Heart right ventricle (tissue), 16 donors: ENCODE measurements at regions of chr5 and their contacts with region 1.

Region 1: GRCh38 chr5:88613050-88613449 is 269.9 kb downstream of the MEF2C start:
- DNase-seq: no peak
- ATAC-seq: no peak
- H3K4me3 ChIP-seq: no peak overlapping the region
- H3K27ac ChIP-seq: no peak overlapping the region
- H3K4me1 ChIP-seq: no peaks in the 10 kb centered on the region
- H3K27me3 ChIP-seq: peaks cover 0 to 14% (median 0%) of the 10 kb centered on the region in 7 donors
- CTCF ChIP-seq: no peak

Region 2: GRCh38 chr5:86841000-86841644 is 1771.9 kb before region 1 on chr5:
- intact Hi-C with region 1: loop called in 1 of 10 experiments (anchors 5 kb)
- DNase-seq: no peak
- ATAC-seq: no peak
- H3K4me3 ChIP-seq: no peak overlapping the region
- H3K27ac ChIP-seq: no peak overlapping the region
- H3K4me1 ChIP-seq: no peaks in the 10 kb centered on the region
- H3K27me3 ChIP-seq: no peaks in the 10 kb centered on the region
- CTCF ChIP-seq: no peak

Region 3: GRCh38 chr5:88746438-88746882 is 133.4 kb after region 1 on chr5:
- intact Hi-C with region 1: no loop called
- DNase-seq: no peak
- ATAC-seq: peak in 2 of 8 donors; percentile 46 to 50
- H3K4me3 ChIP-seq: no peak overlapping the region
- H3K27ac ChIP-seq: peak overlapping the region in 1 of 10 donors; percentile 29
- H3K4me1 ChIP-seq: peaks cover 0 to 38% (median 18%) of the 10 kb centered on the region in 9 donors
- H3K27me3 ChIP-seq: no peaks in the 10 kb centered on the region
- CTCF ChIP-seq: no peak